ENCODE measurements at regions of chr2 and their contacts with region 1.

Region 1: GRCh38 chr2:200405599-200406298 is 99.3 kb downstream of the SPATS2L start:
- DNase-seq: peak; percentile 57 to 99
- H3K4me3 ChIP-seq: peak overlapping the region; percentile 30; the same call in 1 of the 2 replicates
- H3K27ac ChIP-seq: peak overlapping the region; percentile 92
- H3K4me1 ChIP-seq: peaks cover 75% of the 10 kb centered on the region
- H3K27me3 ChIP-seq: no peaks in the 10 kb centered on the region
- CTCF ChIP-seq: no peak

Region 2: DNA sequence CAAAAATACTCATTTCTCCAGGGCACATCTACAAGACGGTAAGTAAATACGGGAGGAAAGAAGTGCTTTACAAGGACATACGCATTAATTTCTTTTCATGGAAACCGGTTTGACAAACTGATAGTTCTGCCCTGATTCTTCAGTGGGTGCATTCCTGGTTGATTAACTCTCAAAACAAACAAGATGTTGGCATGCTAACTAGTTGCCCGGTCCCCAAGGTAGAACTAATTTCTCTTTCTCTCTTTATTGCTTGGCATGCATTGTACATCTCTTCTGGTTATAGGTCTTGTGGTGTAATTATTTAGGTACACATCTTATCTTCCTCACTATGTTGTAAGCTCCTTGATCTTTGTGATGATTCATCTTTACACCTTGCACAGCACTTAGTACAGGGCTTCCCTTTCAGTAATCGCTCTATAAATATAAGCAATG is 146.2 kb before region 1 on chr2:
- CTCF ChIA-PET with region 1: no interaction called
- POLR2A ChIA-PET with region 1: no interaction called
- intact Hi-C with region 1: loop called (anchors 2 kb)
- DNase-seq: peak; percentile 56 to 99
- H3K4me3 ChIP-seq: peak overlapping the region; percentile 39; the same call in 1 of the 2 replicates
- H3K27ac ChIP-seq: peak overlapping the region; percentile 86
- H3K4me1 ChIP-seq: peaks cover 38% of the 10 kb centered on the region
- H3K27me3 ChIP-seq: no peaks in the 10 kb centered on the region
- CTCF ChIP-seq: no peak

Region 3: DNA sequence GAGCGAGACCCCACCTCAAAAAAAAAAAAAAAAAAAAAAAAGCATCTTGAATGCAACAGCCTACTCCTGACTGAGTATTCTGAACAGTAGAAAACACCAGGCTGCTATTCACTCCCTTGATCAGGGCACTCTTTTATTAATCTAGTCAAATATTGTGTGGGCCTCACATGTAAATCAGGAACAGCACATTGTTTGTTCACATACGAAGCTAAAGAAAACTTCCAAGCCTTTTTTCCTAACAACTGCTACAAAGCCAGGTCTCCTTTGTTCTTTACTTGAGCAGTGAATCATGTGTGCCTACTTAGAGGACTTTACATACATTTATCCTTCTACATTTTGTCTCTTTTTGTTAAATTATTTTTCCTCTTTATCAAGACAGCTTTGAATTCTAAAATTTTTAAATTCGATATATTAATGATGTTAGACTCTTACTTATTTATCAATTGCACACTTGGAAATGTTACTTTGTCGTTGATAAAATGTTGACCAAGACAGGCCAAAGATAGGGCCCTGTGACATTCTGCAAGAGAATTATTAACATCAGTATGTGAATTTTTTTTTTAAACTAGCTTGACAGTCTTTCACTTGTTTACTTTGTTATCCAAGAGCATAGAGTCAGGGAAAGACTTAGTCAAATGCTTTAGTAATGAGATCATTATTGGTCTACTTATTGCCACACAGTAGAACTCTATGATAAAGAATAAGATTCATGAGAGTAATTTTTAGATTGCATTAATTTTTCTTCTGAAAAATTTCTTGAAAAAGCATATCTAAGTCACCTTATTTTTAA is 86.0 kb before region 1 on chr2:
- CTCF ChIA-PET with region 1: no interaction called
- POLR2A ChIA-PET with region 1: no interaction called
- intact Hi-C with region 1: loop called (anchors 2 kb)
- DNase-seq: peak in 1 of 2 experiments; percentile 86
- H3K4me3 ChIP-seq: 0 out of 2 replicates have a peak overlapping the region, but pooled peaks have one; percentile 31
- H3K27ac ChIP-seq: peak overlapping the region; percentile 89
- H3K4me1 ChIP-seq: peaks cover 79% of the 10 kb centered on the region
- H3K27me3 ChIP-seq: no peaks in the 10 kb centered on the region
- CTCF ChIP-seq: no peak

Region 4: GRCh38 chr2:200483729-200484198 is 78.0 kb after region 1 on chr2:
- CTCF ChIA-PET with region 1: interaction called, 13 read pairs
- POLR2A ChIA-PET with region 1: interaction called, 6 read pairs
- intact Hi-C with region 1: loop called (anchors 2 kb)
- DNase-seq: peak; percentile 59 to 66
- H3K4me3 ChIP-seq: no peak overlapping the region
- H3K27ac ChIP-seq: no peak overlapping the region
- H3K4me1 ChIP-seq: peaks cover 43% of the 10 kb centered on the region
- H3K27me3 ChIP-seq: no peaks in the 10 kb centered on the region
- CTCF ChIP-seq: peak; percentile 58

Measured in PC-9 (cell line).